Activated naive CD8-positive, alpha-beta T cell treated with anti-CD3 and anti-CD28 coated beads, Interleukin-2, amount 10 ng/mL, durations not matched to agents 7 days and 5 days (primary cell): ENCODE measurements at regions of chr19 and their contacts with region 1.

Region 1: GRCh38 chr19:7670150-7670783 is 1.4 kb downstream of the RETN start:
- DNase-seq: peak; percentile 75
- ATAC-seq: peak; percentile 81
- H3K4me3 Mint-ChIP-seq: peak overlapping the region; percentile 79
- H3K27ac Mint-ChIP-seq: peak overlapping the region; percentile 86
- H3K4me1 Mint-ChIP-seq: peaks cover 24% of the 10 kb centered on the region
- H3K27me3 Mint-ChIP-seq: peaks cover 22% of the 10 kb centered on the region

Region 2: DNA sequence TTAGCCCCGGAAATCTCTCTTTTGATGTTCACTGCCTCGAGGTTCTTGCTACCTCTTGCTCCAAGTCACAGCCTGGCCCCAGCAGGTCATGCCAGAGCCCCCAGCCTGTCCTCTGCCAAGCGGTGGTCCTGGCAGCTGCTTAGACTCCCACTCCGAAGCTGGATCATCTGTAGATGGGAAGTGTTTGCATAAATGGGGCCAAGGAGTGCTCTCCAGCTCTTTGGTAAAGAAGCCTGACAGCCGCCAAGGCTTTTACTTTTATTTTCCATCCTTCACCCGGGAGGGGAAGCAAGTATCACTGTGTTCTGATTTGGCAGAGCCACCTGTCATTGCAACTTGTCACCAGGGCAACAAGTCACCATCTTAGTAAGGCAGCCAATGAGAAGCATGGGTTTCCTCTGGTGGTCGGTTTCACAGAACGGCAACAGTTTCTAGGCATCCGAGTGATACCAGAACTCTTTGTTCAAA is 12.0 kb before region 1 on chr19:
- POLR2A ChIA-PET with region 1: interaction called, 33 read pairs
- DNase-seq: peak; percentile 61
- ATAC-seq: peak; percentile 89
- H3K4me3 Mint-ChIP-seq: peak overlapping the region; percentile 82
- H3K27ac Mint-ChIP-seq: peak overlapping the region; percentile 83
- H3K4me1 Mint-ChIP-seq: peaks cover 26% of the 10 kb centered on the region
- H3K27me3 Mint-ChIP-seq: no peaks in the 10 kb centered on the region